ENCODE measurements at regions of chr20 and their contacts with region 1.

Region 1: DNA sequence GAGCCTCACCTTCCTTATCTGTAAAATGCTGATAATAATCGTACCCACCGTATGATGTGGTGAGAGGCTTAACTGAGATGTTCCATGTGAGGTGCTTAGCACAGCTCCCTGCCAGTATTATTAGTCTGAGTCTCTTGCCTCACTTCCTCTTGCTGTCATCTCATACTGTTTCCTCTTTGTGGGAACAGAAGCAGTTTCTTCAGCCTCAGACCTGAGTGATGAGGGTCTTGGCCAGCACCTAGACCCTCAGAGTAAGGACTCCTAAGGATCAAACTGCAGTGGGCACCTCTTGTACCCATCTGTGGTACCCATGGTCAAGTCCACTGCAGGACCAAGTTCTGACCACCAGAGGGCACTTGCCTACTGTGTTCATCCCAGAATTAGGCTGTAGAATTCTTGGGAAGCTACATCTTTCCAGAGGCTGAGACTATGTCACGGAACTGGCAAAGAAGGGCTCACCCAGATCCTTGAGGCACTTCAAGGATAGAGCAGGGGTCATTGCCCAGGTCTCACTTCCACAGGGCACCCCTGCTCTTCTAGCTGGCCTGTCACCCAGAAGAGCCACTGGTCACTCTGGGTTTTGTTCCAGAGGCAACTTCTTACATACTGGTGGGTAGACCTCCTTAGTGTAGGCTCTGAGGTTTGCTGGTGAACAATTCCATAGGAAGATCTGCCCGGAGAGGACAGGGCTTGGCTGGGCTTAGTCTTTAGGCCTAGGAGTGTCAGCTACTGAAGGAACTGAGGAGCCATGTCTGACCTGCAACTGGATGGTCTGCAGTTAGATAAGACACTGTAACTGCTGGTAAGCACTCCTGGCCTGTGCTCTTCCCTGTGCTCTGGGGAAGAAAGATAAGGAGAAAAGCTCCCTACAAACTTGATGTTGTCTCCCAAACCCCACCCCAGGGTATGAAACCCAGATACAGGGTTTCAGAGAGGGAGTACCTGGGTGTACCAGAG is 20.6 kb upstream of the SGK2 start:
- DNase-seq: peak; percentile 59
- H3K4me3 ChIP-seq: no peak overlapping the region
- H3K27ac ChIP-seq: no peak overlapping the region
- H3K4me1 ChIP-seq: no peaks in the 10 kb centered on the region
- H3K27me3 ChIP-seq: no peaks in the 10 kb centered on the region
- CTCF ChIP-seq: peak; percentile 82 to 85
- POLR2A ChIP-seq: no peak

Region 2: DNA sequence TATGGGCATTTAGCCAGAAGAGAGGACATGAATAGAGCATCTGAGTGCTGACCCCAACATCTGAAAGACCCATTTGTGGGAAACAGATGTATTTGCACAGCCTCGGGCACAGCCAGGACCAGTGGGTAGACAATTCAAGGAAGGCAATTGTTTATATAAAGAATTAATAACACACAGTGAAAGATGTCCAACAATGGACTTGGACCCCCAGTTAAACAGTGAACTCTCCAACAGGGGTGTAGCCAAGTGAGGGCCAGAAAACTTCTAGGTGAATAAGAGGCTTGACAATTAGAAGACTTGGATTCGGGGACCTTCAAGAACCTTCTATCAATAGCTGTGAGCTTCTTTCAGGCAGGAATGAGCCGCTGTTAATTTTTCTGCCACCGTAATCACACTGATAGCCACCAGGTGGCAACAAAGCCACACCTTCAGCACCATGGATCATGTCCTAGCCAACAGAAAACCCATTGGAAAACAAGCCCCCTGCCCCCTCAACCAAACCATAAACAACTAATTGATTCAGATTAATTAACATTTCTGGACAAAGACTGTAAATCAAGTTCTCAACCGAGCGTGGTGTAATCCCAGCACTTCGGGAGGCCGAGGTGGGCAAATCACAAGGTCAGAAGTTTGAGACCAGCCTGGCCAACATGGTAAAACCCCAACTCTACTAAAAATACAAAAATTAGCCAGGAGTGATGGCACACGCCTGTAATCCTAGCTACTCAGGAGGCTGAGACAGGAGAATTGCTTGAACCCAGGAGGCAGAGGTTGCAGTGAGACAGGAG is 89.3 kb before region 1 on chr20:
- CTCF ChIA-PET with region 1: interaction called, 13 read pairs
- POLR2A ChIA-PET with region 1: no interaction called
- dilution Hi-C with region 1: no loop called
- intact Hi-C with region 1: loop called (anchors 1 kb)
- DNase-seq: peak; percentile 78
- H3K4me3 ChIP-seq: no peak overlapping the region
- H3K27ac ChIP-seq: no peak overlapping the region
- H3K4me1 ChIP-seq: peaks cover 7% of the 10 kb centered on the region
- H3K27me3 ChIP-seq: peaks cover 10 to 16% of the 10 kb centered on the region in 2 experiments
- CTCF ChIP-seq: peak; percentile 67 to 68
- POLR2A ChIP-seq: no peak

Region 3: GRCh38 chr20:43558412-43559146 is 20.4 kb after region 1 on chr20 and contains the start of gene SGK2:
- CTCF ChIA-PET with region 1: interaction called, 17 read pairs
- POLR2A ChIA-PET with region 1: no interaction called
- dilution Hi-C with region 1: no loop called
- intact Hi-C with region 1: no loop called
- DNase-seq: no peak
- H3K4me3 ChIP-seq: no peak within 1 kb of the TSS
- H3K27ac ChIP-seq: no peak within 1 kb of the TSS
- H3K4me1 ChIP-seq: no peaks in the 10 kb centered on the region
- H3K27me3 ChIP-seq: no peaks in the 10 kb centered on the region
- CTCF ChIP-seq: no peak
- POLR2A ChIP-seq: no peak
- total RNA-seq, gene SGK2: 0.27 and 0.35 TPM in 2 replicates

Region 4: GRCh38 chr20:43590392-43591323 is 52.5 kb after region 1 on chr20 and contains the start of gene IFT52:
- CTCF ChIA-PET with region 1: interaction called, 25 read pairs
- POLR2A ChIA-PET with region 1: no interaction called
- dilution Hi-C with region 1: no loop called
- intact Hi-C with region 1: loop called (anchors 2 kb)
- DNase-seq: peak; percentile 93
- H3K4me3 ChIP-seq: peak within 1 kb of the TSS; percentile 64 to 100 (median 80)
- H3K27ac ChIP-seq: peak within 1 kb of the TSS; percentile 91
- H3K4me1 ChIP-seq: peaks cover 9% of the 10 kb centered on the region
- H3K27me3 ChIP-seq: peaks cover 0 to 2% of the 10 kb centered on the region in 2 experiments
- CTCF ChIP-seq: no peak
- POLR2A ChIP-seq: peak; percentile 32
- total RNA-seq, gene IFT52: 29.7 and 30.0 TPM in 2 replicates

Region 5: GRCh38 chr20:43914311-43915210 is 376.4 kb after region 1 on chr20 and contains the start of gene TOX2:
- CTCF ChIA-PET with region 1: interaction called, 8 read pairs
- POLR2A ChIA-PET with region 1: no interaction called
- dilution Hi-C with region 1: no loop called
- intact Hi-C with region 1: loop called (anchors 5 kb)
- DNase-seq: no peak
- H3K4me3 ChIP-seq: peak within 1 kb of the TSS; percentile 50 to 56 (median 52)
- H3K27ac ChIP-seq: no peak within 1 kb of the TSS
- H3K4me1 ChIP-seq: peaks cover 24% of the 10 kb centered on the region
- H3K27me3 ChIP-seq: peaks cover 0 to 4% of the 10 kb centered on the region in 2 experiments
- CTCF ChIP-seq: no peak
- POLR2A ChIP-seq: no peak
- total RNA-seq, gene TOX2: 18.6 and 25.7 TPM in 2 replicates

Region 6: DNA sequence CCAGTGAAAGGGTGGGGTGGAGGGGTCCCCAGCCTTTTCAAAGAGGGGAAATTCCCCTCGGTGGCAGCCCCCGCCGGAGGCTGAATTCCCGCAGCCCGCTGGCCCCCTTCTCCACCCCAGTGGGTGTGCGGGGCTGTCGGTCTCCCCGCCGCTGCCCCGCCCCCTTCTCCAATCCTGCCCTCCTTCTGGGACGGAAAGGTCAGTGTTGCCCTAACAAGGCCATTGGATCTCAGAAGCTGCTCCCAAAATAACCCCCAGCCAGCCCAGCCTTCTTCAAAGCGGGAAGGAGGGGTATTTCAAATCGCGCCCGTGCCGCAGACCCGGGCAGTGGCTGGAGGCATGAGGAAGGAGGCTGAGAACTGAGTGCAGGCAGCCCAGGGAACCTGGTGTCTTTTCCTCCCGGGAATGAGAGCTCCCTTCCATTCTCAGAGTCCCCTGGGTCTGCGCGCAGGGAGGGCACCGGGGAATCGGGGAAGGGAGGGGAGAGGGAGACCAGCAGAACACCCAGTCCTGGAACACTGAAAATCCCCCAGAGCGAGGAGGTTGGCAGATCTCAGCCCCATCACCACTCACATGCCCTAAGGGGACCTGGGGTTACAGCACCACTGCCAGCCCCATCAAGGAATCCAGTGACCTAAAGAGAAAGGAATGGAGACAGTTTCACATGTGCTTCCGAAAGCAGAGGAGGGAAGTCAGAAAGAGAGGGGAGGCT is 649.0 kb after region 1 on chr20 and contains the start of gene JPH2:
- CTCF ChIA-PET with region 1: interaction called, 14 read pairs
- POLR2A ChIA-PET with region 1: no interaction called
- dilution Hi-C with region 1: no loop called
- intact Hi-C with region 1: no loop called
- DNase-seq: no peak
- H3K4me3 ChIP-seq: no peak within 1 kb of the TSS
- H3K27ac ChIP-seq: no peak within 1 kb of the TSS
- H3K4me1 ChIP-seq: peaks cover 3% of the 10 kb centered on the region
- H3K27me3 ChIP-seq: peaks cover 14 to 18% of the 10 kb centered on the region in 2 experiments
- CTCF ChIP-seq: no peak
- POLR2A ChIP-seq: no peak
- total RNA-seq, gene JPH2: not detected in 2 replicates

Measured in endothelial cell of umbilical vein (primary cell).